ENCODE measurements at regions of chr18 and their contacts with region 1.

Region 1: GRCh38 chr18:3593904-3594661 is 144.1 kb downstream of the TGIF1 start:
- DNase-seq: peak; percentile 97 to 98 (median 97)
- H3K4me3 ChIP-seq: peak overlapping the region; percentile 21 to 84 (median 72)
- H3K27ac ChIP-seq: peak overlapping the region; percentile 82 to 92
- H3K4me1 ChIP-seq: peaks cover 26 to 67% (median 53%) of the 10 kb centered on the region in 4 experiments
- H3K27me3 ChIP-seq: no peaks in the 10 kb centered on the region

Region 2: GRCh38 chr18:3447895-3448837 is 145.9 kb before region 1 on chr18:
- CTCF ChIA-PET with region 1: interaction called, 18 read pairs
- POLR2A ChIA-PET with region 1: interaction called, 19 read pairs
- DNase-seq: peak; percentile 95 to 98 (median 96)
- H3K4me3 ChIP-seq: peak overlapping the region; percentile 42 to 95 (median 86)
- H3K27ac ChIP-seq: peak overlapping the region; percentile 95 to 98
- H3K4me1 ChIP-seq: peaks cover 13 to 62% (median 53%) of the 10 kb centered on the region in 4 experiments
- H3K27me3 ChIP-seq: no peaks in the 10 kb centered on the region

Region 3: DNA sequence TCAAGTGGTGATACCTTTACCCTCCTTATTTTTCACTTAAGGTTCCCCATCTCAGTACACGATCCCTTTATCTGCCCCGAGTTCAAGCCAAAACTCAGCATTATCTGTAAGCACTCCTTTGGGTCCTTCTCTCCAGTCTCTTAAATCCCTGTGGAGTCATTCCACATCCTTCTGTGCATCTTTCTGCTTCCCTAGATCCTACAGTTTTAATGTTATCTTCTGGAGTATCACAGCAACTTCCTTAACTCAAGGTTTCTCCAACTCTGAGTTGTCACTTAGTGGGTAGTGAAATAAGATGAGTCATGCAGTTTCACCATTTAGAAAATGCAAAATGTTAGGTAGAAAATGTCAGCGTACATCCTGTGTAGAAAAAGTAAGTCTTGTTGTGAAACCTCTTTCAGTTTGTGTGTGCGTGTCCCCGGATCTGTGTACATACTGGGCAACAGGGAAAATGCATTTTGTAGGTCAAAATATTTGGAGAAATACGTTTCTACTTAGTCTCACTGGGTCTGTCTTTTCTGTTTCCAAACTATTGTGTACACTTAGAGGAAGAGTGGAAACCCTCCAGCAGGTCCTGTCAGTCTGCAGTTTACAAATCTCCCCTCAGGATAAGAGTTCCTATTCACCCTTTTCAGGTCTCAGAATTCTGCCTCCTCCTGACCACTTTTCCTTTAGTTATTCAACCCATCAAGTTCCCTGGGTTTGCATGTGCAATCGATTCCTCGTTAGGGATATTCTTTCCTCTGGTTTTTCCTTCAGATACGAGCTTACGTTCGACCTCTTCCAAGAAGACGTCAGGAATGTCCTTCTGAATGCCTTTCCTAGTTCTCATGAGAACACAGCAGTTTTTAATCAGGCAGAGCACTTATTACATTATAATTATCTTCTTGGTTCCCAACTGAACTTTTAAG is 10.7 kb after region 1 on chr18:
- CTCF ChIA-PET with region 1: interaction called, 16 read pairs
- POLR2A ChIA-PET with region 1: interaction called, 7 read pairs
- DNase-seq: peak in 2 of 3 donors; percentile 89 to 93
- H3K4me3 ChIP-seq: peak overlapping the region in 6 of 7 experiments; percentile 36 to 85 (median 64)
- H3K27ac ChIP-seq: peak overlapping the region; percentile 85 to 95
- H3K4me1 ChIP-seq: peaks cover 30 to 65% (median 52%) of the 10 kb centered on the region in 4 experiments
- H3K27me3 ChIP-seq: no peaks in the 10 kb centered on the region

Region 4: DNA sequence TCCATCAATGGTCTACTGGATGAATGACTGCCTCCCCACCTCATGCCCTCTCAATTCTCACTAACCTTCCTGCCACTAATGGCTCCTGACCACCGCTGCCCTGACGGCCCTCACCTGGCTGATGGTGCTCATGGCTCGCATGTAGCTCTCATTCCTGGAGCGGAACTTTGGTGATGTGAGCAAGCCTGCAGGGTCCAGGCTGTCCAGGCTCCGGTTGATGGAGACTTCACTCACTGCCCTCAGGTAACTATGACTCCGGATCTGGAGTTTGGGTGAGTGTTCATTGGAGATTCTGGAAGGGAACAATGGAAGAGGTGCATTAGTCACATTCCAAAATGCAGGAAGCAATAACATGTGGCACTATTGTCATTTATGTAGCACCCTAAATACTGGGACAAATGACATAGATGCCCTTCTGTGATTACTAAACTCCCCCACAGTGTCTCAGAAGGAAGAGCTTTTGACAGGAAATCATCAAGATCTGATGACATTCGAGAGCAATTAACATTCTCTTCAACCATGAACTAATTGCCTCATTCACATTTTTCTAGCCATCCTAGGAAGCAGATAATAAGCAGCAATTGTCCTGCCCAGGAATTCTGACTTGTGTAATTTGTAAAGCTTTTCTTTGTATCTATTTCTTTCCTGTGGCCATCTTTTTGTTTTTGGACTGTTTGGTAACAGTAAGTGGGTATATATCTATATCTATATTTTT is 148.3 kb after region 1 on chr18:
- CTCF ChIA-PET with region 1: no interaction called
- POLR2A ChIA-PET with region 1: no interaction called
- DNase-seq: no peak
- H3K4me3 ChIP-seq: no peak overlapping the region
- H3K27ac ChIP-seq: no peak overlapping the region
- H3K4me1 ChIP-seq: no peaks in the 10 kb centered on the region
- H3K27me3 ChIP-seq: no peaks in the 10 kb centered on the region